Astrocyte of the cerebellum (primary cell): ENCODE measurements at regions of chr1 and their contacts with region 1.

Region 1: GRCh38 chr1:9269078-9269501 is 23.6 kb upstream of the SPSB1 start:
- DNase-seq: no peak
- H3K4me3 ChIP-seq: no peak overlapping the region
- CTCF ChIP-seq: no peak

Region 2: DNA sequence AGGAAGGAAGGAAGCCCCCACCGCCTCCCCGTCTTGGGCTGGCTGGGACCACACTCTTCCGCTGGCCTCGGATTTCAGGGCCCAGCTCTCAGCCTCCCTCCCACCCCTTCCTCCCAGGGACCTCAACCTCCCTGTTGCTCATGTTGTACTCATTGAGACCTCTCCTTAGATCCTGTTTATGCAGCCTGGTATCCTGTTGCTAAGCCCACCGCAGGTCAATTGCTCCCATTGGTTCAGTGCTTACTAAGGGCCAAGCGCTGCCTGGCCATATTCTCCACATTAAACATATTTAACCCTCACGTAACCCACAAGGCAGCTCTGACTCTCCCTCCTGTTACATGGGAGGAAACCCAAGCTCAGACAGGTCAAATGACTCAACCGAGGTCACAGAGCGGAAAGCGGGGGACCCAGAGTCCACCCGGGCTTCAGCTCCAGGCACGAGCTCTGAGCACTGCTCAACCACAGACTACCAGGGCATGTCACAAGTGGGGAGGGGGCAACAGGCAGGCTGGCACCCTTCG is 57.7 kb before region 1 on chr1:
- in situ Hi-C with region 1: no loop called
- DNase-seq: peak; percentile 57
- H3K4me3 ChIP-seq: no peak overlapping the region
- CTCF ChIP-seq: no peak

Region 3: DNA sequence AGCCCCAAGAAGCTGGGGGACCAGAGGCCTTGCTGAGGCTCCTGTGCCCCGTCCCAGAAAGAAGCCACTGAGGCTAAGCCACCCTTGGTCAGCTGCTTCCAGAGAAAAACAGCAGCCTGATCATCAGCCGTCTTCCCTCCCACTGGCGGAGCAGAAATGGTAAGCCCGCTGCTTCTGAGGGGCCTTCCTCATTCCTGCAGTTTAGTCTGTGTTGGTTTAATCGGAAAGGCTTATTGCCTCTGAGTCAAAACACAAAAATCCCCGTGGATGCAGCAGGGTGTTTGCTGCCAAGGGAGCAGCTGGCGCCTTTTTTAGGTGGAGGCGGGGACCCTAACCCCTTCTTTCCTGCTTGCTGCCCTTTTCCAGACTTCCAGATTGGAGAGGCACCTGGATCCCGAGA is 57.5 kb after region 1 on chr1:
- in situ Hi-C with region 1: loop called (anchors 5 kb)
- DNase-seq: peak; percentile 38
- H3K4me3 ChIP-seq: no peak overlapping the region
- CTCF ChIP-seq: no peak